ENCODE measurements at regions of chr18 and their contacts with region 1.

Region 1: GRCh38 chr18:45690975-45691815 is 32.8 kb upstream of the SLC14A1 start:
- DNase-seq: peak; percentile 60
- H3K4me3 Mint-ChIP-seq: no peak overlapping the region
- H3K27ac Mint-ChIP-seq: no peak overlapping the region
- H3K4me1 Mint-ChIP-seq: peaks cover 38% of the 10 kb centered on the region
- H3K27me3 Mint-ChIP-seq: peaks cover 25% of the 10 kb centered on the region

Region 2: GRCh38 chr18:45441110-45441842 is 249.9 kb before region 1 on chr18:
- intact Hi-C with region 1: no loop called
- DNase-seq: no peak
- H3K4me3 Mint-ChIP-seq: no peak overlapping the region
- H3K27ac Mint-ChIP-seq: no peak overlapping the region
- H3K4me1 Mint-ChIP-seq: no peaks in the 10 kb centered on the region
- H3K27me3 Mint-ChIP-seq: no peaks in the 10 kb centered on the region

Region 3: DNA sequence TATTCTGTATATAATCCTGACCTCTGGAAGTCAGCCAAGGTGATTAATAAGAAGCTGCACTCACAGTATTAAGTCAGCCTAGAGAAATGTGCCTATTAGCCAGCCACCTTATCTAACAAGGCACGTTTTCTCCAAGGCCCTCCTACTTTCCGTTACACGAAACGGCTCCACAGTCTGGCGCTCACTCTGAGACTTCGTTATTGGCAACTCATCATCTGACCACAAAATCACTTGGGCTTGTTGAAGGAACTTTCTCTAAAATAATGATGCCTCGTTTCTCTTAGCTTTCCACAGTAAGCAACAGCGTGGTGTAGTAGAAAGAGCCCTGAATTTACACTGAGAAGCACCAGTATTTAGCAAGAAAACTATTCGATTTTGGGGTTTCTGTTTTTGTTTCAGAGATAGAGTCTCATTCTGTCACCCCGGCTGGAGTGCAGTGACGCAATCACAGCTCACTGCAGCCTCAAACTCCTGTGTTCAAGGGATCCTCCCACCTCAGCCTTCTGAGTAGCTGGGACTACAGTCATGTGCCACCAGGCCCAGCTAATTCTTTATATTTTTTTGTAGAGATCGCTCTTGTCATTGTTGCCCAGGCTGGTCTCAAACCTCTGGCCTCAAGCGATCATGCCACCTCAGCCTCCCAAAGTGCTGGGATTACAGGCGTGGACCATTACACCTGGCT is 20.8 kb before region 1 on chr18:
- intact Hi-C with region 1: loop called (anchors 1 kb)
- DNase-seq: peak; percentile 43
- H3K4me3 Mint-ChIP-seq: peak overlapping the region; percentile 57
- H3K27ac Mint-ChIP-seq: peak overlapping the region; percentile 88
- H3K4me1 Mint-ChIP-seq: peaks cover 66% of the 10 kb centered on the region
- H3K27me3 Mint-ChIP-seq: peaks cover 24% of the 10 kb centered on the region

Region 4: GRCh38 chr18:45879681-45880655 is 188.8 kb after region 1 on chr18:
- intact Hi-C with region 1: loop called (anchors 1 kb)
- DNase-seq: peak; percentile 52
- H3K4me3 Mint-ChIP-seq: no peak overlapping the region
- H3K27ac Mint-ChIP-seq: no peak overlapping the region
- H3K4me1 Mint-ChIP-seq: peaks cover 12% of the 10 kb centered on the region
- H3K27me3 Mint-ChIP-seq: no peaks in the 10 kb centered on the region

Region 5: DNA sequence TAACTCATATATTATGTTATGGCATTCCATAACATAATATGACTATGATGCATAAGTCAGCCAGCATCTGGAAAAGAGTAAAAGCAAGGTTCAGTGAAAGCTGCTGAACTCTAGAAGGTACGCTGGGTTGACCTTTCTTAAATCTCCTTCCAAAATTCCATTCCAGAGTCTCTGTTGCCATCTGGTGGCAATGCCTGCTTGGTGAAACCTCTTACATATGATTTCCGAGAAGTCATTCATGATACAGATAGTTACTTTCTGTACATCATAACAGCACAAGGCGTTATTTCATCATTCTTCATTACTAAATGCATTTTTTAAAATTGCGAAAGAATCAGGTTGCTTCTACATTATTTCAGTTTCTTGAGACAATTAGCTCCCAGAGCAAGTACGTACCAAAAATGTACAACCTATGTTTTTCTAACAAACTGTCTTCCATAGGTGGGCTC is 282.9 kb after region 1 on chr18:
- intact Hi-C with region 1: loop called (anchors 2 kb)
- DNase-seq: peak; percentile 55
- H3K4me3 Mint-ChIP-seq: no peak overlapping the region
- H3K27ac Mint-ChIP-seq: peak overlapping the region; percentile 38
- H3K4me1 Mint-ChIP-seq: peaks cover 23% of the 10 kb centered on the region
- H3K27me3 Mint-ChIP-seq: no peaks in the 10 kb centered on the region

Region 6: DNA sequence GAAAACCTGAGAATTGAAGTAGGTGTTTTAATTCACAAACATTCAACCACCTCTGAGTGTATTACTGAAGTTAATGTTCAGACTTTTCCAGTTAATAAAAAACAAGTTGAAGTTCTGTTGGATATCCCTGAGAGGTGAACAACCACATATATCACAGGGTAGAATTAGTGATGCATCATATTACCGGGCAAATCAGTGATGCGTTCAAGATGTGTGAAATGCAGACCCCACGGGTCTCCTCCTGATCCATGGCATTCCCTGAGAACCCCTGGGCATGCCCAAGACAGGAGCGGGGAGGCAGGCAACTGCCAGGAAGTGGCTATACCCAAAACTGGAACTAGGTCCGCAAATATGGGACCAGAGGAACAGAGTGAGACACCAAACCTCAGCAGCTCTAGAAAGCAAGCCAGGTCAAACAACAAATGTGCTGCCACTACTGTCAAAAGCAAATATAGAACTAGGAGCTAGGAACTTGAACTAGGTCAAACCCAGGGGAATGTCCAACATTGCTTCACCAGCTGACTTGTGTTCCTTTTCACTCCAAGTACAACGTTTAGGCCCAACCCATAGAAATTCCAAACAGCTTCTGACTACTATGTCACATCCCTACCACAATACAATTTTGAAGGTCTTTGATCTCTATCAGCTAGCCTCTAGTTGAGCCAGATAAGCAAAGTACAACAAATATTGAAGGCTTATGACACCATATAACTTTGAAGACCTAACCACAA is 360.7 kb after region 1 on chr18:
- intact Hi-C with region 1: loop called (anchors 5 kb)
- DNase-seq: no peak
- H3K4me3 Mint-ChIP-seq: no peak overlapping the region
- H3K27ac Mint-ChIP-seq: no peak overlapping the region
- H3K4me1 Mint-ChIP-seq: peaks cover 50% of the 10 kb centered on the region
- H3K27me3 Mint-ChIP-seq: no peaks in the 10 kb centered on the region

Measured in activated T-helper 2 cell treated with anti-CD3 and anti-CD28 coated beads, Interferon-gamma antibody, Interleukin-2, Interleukin-4, amounts not matched to agents 10 μg/mL and 5 μg/mL and 100 μg/mL, durations not matched to agents 14 hours and 24 hours and 36 hours (primary cell).